ENCODE measurements at regions of chr15 and their contacts with region 1.

Region 1: GRCh38 chr15:35089551-35089950 is 4.5 kb upstream of the NANOGP8 start:
- DNase-seq: no peak
- ATAC-seq: no peak
- H3K4me3 Mint-ChIP-seq: no peak overlapping the region
- H3K27ac Mint-ChIP-seq: no peak overlapping the region
- H3K4me1 Mint-ChIP-seq: no peaks in the 10 kb centered on the region
- H3K27me3 Mint-ChIP-seq: peaks cover 2% of the 10 kb centered on the region

Region 2: DNA sequence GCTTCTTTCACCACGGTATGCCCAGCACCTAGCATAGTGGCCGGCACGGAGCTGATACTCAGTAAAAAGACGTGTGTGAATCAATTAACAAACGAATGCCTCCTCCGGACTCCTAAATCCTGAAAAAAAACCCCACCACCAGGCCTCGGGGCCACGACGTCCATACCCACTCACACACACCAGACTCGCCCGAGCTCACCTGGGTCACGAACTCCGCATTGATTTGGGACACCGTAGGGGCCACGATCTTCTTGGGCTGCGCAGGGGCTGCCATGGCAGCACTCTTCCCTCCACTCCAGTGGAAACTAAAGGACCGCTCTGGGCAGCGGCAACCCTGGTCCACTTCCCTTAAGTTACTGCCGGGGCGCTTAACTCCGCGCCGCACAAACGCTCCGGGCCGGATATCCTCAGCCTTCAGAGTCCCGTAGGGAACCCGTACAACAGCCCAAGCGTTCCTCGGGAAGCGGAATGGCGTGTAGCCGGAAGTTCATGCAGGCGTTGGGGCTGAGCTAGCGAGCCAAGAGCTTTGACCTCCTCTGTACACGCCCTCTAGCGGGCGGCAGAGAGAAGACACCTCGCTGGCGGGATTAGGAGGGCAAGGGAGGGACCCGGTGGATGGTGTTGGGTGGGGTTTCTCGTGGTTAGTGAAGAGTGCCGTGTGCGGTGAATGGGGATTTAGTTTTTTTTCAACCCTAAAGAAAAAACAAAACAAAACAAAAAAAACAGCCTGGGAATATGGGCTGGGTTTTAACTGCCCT is 120.0 kb before region 1 on chr15 and contains the start of gene AQR:
- CTCF ChIA-PET with region 1: no interaction called
- POLR2A ChIA-PET with region 1: no interaction called
- DNase-seq: peak; percentile 95
- ATAC-seq: peak; percentile 97
- H3K4me3 Mint-ChIP-seq: peak within 1 kb of the TSS; percentile 99
- H3K27ac Mint-ChIP-seq: peak within 1 kb of the TSS; percentile 92
- H3K4me1 Mint-ChIP-seq: peaks cover 34% of the 10 kb centered on the region
- H3K27me3 Mint-ChIP-seq: no peaks in the 10 kb centered on the region
- total RNA-seq, gene AQR: 33.2 to 37.0 TPM

Region 3: DNA sequence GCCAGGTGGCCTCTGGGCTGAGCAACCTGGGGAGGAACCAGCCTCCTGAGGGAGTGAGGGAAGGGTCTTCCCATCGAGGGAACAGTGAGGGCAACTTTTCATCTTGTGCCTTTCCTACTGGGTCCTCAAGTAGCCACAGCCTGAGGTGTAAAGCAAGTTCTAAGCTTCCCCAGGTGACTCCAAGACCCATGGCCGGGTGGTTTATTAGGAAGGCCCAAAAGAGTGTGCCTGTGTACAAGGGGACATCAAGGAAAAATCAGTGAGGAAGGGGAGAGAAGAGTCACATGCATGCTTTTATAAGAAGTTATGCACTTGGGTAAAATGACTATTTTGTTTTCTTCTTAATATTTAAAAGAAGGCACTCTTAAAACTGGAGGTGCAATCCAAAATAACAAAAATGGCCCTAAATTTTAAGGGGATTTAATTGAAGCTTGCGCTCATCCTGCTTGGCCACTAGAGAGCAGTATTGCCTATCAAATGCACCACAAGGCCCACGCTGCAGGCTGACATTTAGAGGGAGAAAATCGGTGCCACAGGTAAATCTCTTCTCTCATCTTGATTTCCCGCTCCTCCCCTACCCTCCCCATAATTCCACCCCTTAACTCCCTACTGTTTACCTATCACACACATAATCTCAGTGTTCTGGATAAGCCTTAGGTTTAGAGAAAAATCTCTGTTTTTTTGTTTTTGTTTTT is 11.2 kb before region 1 on chr15:
- CTCF ChIA-PET with region 1: interaction called, 21 read pairs
- POLR2A ChIA-PET with region 1: no interaction called
- DNase-seq: peak; percentile 52
- ATAC-seq: no peak
- H3K4me3 Mint-ChIP-seq: no peak overlapping the region
- H3K27ac Mint-ChIP-seq: no peak overlapping the region
- H3K4me1 Mint-ChIP-seq: no peaks in the 10 kb centered on the region
- H3K27me3 Mint-ChIP-seq: peaks cover 3% of the 10 kb centered on the region

Region 4: GRCh38 chr15:35104526-35105147 is 15.1 kb after region 1 on chr15:
- CTCF ChIA-PET with region 1: no interaction called
- POLR2A ChIA-PET with region 1: no interaction called
- DNase-seq: no peak
- ATAC-seq: no peak
- H3K4me3 Mint-ChIP-seq: no peak overlapping the region
- H3K27ac Mint-ChIP-seq: no peak overlapping the region
- H3K4me1 Mint-ChIP-seq: no peaks in the 10 kb centered on the region
- H3K27me3 Mint-ChIP-seq: no peaks in the 10 kb centered on the region

Region 5: GRCh38 chr15:35206060-35206675 is 116.6 kb after region 1 on chr15:
- CTCF ChIA-PET with region 1: no interaction called
- POLR2A ChIA-PET with region 1: no interaction called
- DNase-seq: no peak
- ATAC-seq: no peak
- H3K4me3 Mint-ChIP-seq: no peak overlapping the region
- H3K27ac Mint-ChIP-seq: no peak overlapping the region
- H3K4me1 Mint-ChIP-seq: no peaks in the 10 kb centered on the region
- H3K27me3 Mint-ChIP-seq: no peaks in the 10 kb centered on the region

Region 6: GRCh38 chr15:35410774-35411173 is 321.2 kb after region 1 on chr15:
- CTCF ChIA-PET with region 1: no interaction called
- POLR2A ChIA-PET with region 1: no interaction called
- DNase-seq: no peak
- ATAC-seq: no peak
- H3K4me3 Mint-ChIP-seq: no peak overlapping the region
- H3K27ac Mint-ChIP-seq: no peak overlapping the region
- H3K4me1 Mint-ChIP-seq: no peaks in the 10 kb centered on the region
- H3K27me3 Mint-ChIP-seq: no peaks in the 10 kb centered on the region